ENCODE measurements at regions of chr19 and their contacts with region 1.

Region 1: DNA sequence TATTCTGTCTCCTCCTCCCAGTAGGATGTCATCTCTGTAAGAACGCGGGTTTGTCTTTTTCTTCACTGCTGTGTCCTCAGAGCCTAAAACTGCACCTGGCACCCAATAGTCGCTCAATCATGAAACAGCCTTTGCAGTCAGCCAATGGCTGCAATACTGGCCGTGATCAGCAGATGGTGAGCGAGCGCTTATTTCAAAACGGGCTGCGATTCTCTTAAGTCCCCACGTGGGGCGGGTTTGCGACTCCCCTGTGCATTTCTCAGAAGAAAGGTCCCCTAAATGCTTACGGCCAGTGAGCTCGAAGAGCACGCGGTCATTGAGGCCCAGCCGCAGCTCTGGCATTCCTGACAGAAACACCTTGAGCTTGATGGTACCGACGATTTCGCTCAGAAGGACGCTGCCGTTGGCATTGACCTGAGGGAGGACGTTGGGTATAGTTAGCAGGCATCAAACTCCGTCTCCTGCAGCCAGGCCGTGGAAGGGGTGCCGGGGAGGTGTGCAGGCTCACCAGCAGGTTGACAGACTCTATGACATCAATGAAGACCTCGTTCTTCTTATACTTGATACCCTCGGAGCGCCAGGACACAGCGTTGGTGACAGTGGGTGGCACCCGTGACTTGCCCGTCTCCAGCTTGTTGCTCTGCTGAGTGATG is 6.0 kb downstream of the AP1M2 start:
- DNase-seq: peak; percentile 89
- H3K4me3 Mint-ChIP-seq: no peak overlapping the region
- H3K27ac Mint-ChIP-seq: no peak overlapping the region
- H3K4me1 Mint-ChIP-seq: no peaks in the 10 kb centered on the region
- H3K27me3 Mint-ChIP-seq: no peaks in the 10 kb centered on the region
- CTCF ChIP-seq: peak; percentile 98

Region 2: DNA sequence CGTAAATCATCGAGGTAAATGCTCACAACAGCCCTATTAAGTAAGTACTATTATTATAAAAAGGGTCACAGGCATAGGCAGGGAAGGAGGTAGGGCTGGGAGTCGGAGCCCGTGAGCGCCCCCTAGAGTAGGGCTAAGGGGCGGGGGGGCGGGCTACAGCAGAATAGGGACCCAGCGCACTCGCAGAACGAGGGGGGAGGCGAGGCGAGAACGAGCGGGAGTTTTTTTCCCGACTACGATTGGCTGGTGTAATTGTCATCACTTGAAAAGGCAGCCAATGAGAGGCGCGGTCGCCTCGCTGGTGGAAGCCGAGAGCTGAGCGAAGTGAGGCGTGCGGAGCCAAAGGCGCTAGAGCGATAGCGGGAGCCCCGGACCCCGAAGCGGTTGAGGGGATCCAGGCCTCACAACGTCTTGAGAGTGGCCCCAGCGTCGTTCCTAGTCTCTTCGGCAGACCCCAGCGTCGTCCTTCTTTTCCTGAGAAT is 102.2 kb before region 1 on chr19:
- CTCF ChIA-PET with region 1: interaction called, 11 read pairs
- POLR2A ChIA-PET with region 1: no interaction called
- intact Hi-C with region 1: no loop called
- DNase-seq: peak; percentile 17
- H3K4me3 Mint-ChIP-seq: no peak overlapping the region
- H3K27ac Mint-ChIP-seq: no peak overlapping the region
- H3K4me1 Mint-ChIP-seq: peaks cover 6% of the 10 kb centered on the region
- H3K27me3 Mint-ChIP-seq: no peaks in the 10 kb centered on the region
- CTCF ChIP-seq: peak; percentile 30

Region 3: DNA sequence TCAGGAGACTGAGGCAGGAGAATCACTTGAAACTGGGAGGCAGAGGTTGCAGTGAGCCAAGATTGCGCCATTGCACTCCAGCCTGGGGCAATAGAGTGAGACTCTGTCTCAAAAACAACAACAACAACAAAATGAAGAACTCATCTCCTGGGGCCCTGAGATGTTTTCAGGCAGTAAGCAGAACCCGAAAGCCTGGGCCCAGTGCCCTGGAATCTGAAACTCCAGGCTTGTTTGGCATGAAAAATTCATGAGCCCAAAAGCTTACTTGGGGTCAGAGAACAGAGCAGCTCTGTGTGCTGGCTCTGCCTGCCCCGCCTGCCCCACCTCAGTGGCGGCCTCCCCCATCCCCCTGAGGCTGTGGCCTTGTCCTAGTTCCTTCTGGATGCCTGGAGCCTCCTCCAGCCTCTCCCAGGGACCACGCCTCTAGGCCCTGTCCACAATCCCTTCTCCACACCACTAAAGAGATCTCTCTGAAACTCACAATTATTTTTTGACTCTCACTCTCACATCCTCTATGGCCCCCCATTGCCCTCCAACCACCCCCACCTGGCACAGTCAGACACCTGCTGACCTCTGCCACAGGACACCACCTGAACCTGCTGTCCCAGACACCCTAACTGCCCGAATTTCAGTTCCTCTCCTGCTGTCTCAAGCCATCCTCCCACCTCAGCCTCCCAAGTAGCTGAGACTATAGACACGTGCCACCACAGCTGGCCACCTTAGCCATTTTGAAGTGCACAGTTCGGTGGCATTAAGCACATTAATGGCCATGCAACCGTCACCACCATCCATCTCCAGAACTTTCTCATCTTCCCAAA is 12.9 kb after region 1 on chr19:
- CTCF ChIA-PET with region 1: interaction called, 26 read pairs
- POLR2A ChIA-PET with region 1: interaction called, 3 read pairs
- intact Hi-C with region 1: no loop called
- DNase-seq: no peak
- H3K4me3 Mint-ChIP-seq: no peak overlapping the region
- H3K27ac Mint-ChIP-seq: no peak overlapping the region
- H3K4me1 Mint-ChIP-seq: no peaks in the 10 kb centered on the region
- H3K27me3 Mint-ChIP-seq: no peaks in the 10 kb centered on the region
- CTCF ChIP-seq: no peak

Region 4: DNA sequence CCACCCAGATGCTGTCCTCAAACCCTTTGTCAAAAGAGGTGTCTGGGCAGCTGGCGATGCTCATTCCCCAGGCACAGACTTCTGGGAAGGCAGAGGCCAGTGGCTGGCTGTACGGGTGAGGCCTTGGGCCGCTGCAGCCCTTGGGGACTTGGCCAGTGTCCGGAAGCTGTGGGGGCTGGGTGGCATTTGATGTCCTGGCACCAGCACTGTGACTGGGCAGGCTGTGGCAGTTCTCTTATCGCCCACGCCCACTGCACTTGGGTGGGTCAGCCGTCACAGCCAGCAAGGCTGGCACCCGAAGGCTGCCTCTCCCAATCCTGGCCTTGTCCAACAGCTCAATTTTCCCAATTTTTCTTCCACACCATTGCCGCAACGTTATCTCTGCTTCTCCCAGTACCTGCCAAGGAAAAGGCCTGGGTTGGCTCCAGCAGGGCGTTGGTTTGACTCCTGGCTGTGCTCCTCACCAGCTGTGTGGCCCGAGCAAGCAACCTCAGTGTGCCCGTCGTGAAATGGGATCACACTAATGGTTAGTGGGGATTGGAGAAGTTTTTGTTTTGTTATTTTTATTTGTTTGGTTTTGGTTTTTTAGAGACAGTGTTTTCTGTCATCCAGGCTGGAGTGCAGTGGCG is 31.5 kb after region 1 on chr19:
- CTCF ChIA-PET with region 1: interaction called, 11 read pairs
- POLR2A ChIA-PET with region 1: no interaction called
- intact Hi-C with region 1: no loop called
- DNase-seq: no peak
- H3K4me3 Mint-ChIP-seq: no peak overlapping the region
- H3K27ac Mint-ChIP-seq: no peak overlapping the region
- H3K4me1 Mint-ChIP-seq: peaks cover 3% of the 10 kb centered on the region
- H3K27me3 Mint-ChIP-seq: no peaks in the 10 kb centered on the region
- CTCF ChIP-seq: no peak

Region 5: DNA sequence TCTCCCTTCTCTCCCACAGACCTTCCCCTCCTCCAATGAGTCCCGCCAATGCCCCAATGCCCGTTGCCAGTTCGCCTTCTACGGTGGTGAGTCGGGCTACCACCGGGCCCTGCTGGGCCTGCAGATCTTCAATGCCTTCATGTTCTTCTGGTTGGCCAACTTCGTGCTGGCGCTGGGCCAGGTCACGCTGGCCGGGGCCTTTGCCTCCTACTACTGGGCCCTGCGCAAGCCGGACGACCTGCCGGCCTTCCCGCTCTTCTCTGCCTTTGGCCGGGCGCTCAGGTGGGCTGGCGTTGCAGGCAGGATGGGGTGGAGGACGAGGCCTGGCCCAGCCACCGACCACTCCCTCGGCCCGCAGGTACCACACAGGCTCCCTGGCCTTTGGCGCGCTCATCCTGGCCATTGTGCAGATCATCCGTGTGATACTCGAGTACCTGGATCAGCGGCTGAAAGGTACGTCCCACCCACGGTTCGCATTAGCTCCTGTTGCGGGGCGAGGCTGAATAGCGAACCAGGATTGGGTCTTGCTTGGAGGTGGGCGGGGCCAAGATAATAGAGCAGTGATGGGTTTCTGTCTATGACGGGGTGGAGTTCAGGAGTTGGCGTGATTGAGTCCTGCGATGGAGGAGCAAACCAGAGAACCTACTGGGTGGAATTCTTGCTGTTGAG is 55.3 kb after region 1 on chr19:
- CTCF ChIA-PET with region 1: interaction called, 248 read pairs
- POLR2A ChIA-PET with region 1: no interaction called
- intact Hi-C with region 1: no loop called
- DNase-seq: no peak
- H3K4me3 Mint-ChIP-seq: no peak overlapping the region
- H3K27ac Mint-ChIP-seq: no peak overlapping the region
- H3K4me1 Mint-ChIP-seq: no peaks in the 10 kb centered on the region
- H3K27me3 Mint-ChIP-seq: no peaks in the 10 kb centered on the region
- CTCF ChIP-seq: no peak

Region 6: DNA sequence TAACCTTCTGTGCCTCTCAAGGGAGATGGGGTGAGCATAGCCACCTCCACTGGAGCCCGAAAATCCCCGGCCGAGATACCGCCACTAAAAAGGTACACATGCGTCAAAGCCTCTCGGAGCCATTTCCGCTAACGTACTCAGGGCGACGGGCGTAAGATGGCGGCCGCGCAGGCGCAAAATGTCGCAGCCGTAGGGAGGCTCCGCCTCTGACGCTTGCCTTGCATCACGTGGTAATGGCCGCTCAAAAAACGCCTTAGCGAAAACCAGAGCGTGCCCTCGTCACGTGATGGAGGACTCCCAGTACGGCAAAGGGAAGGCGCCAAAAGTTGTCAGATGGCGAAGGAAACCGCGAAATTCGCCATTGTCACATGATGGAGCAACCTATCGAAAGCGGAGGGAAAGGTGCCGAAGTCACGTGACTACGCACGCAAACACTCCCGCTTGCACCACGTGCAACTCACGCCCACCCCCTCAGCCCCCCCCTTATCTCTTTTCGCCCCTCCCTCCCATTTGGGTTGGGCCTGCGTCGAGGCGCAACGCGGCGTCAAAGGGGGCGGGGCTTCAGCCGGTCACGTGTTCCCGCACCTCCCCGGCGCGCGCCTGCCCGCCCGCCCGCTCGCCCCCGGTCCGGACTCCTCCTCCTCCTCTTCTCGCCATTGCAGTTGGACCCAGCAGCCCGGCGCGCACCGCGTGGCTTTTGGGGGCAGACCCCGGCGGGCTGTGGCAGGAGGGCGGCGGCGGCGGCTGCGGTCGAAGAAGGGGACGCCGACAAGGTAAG is 72.8 kb after region 1 on chr19 and contains the start of gene ILF3:
- CTCF ChIA-PET with region 1: interaction called, 40 read pairs
- POLR2A ChIA-PET with region 1: interaction called, 3 read pairs
- intact Hi-C with region 1: no loop called
- DNase-seq: peak; percentile 100
- H3K4me3 Mint-ChIP-seq: peak within 1 kb of the TSS; percentile 77
- H3K27ac Mint-ChIP-seq: peak within 1 kb of the TSS; percentile 98
- H3K4me1 Mint-ChIP-seq: peaks cover 12% of the 10 kb centered on the region
- H3K27me3 Mint-ChIP-seq: no peaks in the 10 kb centered on the region
- CTCF ChIP-seq: no peak
- total RNA-seq, gene ILF3: 278 and 297 TPM in 2 replicates

Region 7: DNA sequence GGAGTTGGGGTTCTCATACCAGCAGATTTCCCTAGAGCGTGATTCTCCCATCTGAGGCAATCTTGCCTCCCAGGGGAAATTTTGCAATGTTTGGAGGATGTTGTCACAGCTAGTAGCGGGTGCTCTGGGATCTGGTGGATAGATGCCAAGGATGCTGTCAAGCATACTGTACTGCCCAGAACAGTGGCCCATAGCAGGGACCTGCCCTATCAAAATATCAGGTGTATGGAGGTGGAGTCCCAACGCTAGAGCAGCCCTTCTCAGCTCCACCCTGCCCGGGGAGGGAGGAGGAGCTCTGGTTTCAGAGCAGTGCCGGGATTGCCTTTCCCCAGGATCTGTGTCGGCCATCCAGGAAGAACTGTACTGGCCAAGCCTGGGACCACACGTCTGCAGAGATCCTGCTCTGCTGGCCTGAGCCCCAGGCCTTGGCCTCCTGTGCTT is 109.3 kb after region 1 on chr19:
- CTCF ChIA-PET with region 1: interaction called, 11 read pairs
- POLR2A ChIA-PET with region 1: interaction called, 6 read pairs
- intact Hi-C with region 1: no loop called
- DNase-seq: peak; percentile 77
- H3K4me3 Mint-ChIP-seq: no peak overlapping the region
- H3K27ac Mint-ChIP-seq: no peak overlapping the region
- H3K4me1 Mint-ChIP-seq: peaks cover 2% of the 10 kb centered on the region
- H3K27me3 Mint-ChIP-seq: no peaks in the 10 kb centered on the region
- CTCF ChIP-seq: no peak

Region 8: DNA sequence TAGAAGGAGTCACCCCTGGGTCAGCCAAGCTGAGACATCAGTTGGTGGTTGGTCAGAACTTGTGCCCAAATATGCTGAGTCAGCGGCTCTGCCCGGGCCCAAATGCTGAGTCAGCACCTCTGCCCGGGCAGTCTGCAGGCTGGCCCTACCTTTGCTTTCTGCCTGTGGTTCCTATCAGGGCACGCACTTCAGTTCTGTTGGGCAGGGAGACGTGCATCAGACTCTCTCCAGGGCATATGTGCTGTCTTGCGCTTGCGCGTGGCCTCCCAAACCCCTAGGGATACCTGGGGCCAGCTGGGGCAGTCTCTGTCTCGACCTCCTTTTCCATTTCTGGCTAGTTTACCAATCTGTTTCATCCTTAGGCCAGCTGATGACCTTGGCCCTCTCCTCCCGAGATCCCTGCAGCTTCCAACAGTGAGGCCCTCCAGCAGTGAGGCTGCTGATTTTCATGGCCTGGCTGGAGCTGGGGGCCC is 483.8 kb after region 1 on chr19:
- CTCF ChIA-PET with region 1: no interaction called
- POLR2A ChIA-PET with region 1: no interaction called
- intact Hi-C with region 1: no loop called
- DNase-seq: peak; percentile 58
- H3K4me3 Mint-ChIP-seq: no peak overlapping the region
- H3K27ac Mint-ChIP-seq: no peak overlapping the region
- H3K4me1 Mint-ChIP-seq: peaks cover 4% of the 10 kb centered on the region
- H3K27me3 Mint-ChIP-seq: no peaks in the 10 kb centered on the region
- CTCF ChIP-seq: no peak

Measured in MCF 10A (cell line).